AG04450 (cell line): ENCODE measurements at regions of chr22 and their contacts with region 1.

Region 1: DNA sequence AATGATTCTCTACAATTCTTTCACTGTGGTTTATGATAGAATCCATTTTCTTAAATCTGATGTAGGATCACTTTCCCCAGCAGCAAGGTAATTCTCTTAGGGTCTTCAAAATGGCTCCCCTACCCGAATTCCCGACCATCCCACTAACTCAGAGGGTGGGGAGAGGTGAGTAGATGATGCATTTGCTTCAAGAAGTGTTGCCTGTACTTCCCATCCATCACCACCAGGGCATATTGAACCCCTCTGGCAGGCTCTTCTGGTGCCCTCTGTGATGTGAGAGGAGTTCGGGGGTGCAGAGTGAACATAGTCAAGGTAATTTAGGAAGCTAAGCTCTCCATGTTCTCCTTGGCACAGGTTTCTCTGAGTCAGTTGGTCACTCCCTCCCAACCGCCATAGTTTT is 52.3 kb downstream of the ZNRF3 start:
- DNase-seq: no peak
- H3K4me3 ChIP-seq: no peak overlapping the region
- H3K27ac ChIP-seq: no peak overlapping the region
- H3K27me3 ChIP-seq: no peaks in the 10 kb centered on the region
- CTCF ChIP-seq: peak; percentile 34

Region 2: DNA sequence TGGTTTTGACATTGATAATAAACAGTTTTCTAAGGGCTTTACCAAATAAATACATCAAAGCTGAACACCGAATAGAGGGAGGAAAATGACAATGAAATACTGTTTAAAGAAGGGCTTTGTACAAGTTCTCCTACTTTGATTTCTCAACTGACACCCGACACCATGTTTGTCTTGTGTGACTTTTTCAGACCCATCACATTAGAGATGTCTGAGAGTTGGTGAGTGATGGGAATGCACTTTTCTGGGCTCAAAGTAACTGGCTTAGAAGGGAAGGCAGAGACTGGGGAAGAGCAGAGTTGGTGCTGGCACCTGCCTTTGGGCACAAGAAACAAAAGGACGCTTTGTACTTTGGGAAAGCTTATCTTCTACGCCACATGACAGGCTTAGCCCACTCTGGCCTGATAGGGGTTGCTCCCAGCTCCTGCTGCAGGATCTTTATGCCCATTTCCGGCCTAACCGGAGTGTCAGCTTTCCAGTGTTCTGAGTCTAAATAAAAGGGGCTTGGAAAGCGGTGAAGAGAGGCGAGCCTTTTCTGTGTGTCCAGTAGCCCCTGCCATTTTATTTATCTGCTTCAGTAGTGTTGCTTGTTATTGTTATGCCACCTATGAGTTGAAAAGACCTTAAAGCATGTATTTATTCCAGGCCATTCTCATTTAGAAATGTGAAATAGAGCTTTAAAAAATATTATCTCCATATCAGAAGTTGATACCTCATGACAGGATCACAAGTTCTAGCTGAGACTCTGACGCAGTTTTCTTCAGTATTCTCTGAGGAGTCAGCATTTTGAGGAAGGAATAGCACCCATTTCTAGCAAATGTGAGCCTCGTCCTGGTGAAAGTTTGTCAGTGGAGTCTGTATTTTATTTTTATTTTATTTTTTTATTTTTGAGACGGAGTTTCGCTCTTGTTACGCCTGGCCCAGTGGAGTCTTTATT is 161.3 kb after region 1 on chr22:
- CTCF ChIA-PET with region 1: no interaction called
- POLR2A ChIA-PET with region 1: interaction called, 11 read pairs
- DNase-seq: no peak
- H3K4me3 ChIP-seq: no peak overlapping the region
- H3K27ac ChIP-seq: no peak overlapping the region
- H3K27me3 ChIP-seq: no peaks in the 10 kb centered on the region
- CTCF ChIP-seq: no peak

Region 3: DNA sequence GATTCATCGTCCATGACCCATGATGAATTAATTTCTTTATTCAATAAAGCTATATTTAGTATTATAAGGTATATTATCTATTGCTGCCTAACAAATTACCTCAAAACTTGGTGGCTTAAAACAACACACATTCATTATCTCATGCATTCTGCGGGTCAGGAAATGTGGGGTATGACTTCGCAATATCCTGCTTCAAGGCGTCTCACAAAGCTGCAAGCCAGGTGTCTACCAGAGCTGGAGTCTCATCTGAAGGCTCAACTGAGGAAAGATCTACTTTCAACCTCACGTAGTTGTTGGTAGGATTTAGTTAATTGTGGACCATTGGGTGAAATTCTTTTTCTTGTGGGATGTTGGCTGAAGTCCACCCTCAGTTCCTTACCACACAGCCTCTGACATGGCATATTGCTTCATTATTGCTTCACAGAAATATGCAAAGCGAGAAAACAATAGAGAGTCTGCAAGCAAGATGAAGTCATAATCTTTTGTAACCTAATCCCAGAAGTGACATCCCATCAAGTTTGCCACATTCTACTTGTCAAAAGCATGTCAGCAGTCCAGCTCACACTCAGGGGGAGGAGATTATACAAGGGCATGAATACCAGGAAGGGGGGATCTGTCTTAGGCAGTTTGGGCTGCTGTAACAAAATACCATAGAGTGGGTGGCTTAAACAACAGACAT is 182.2 kb after region 1 on chr22:
- CTCF ChIA-PET with region 1: no interaction called
- POLR2A ChIA-PET with region 1: no interaction called
- DNase-seq: no peak
- H3K4me3 ChIP-seq: no peak overlapping the region
- H3K27ac ChIP-seq: no peak overlapping the region
- H3K27me3 ChIP-seq: no peaks in the 10 kb centered on the region
- CTCF ChIP-seq: no peak